CD4-positive, alpha-beta memory T cell (primary cell): ENCODE measurements at regions of chr1 and their contacts with region 1.

Region 1: GRCh38 chr1:160795951-160796383 is at the start of gene LY9:
- DNase-seq: peak; percentile 90 to 96 (median 95)
- H3K4me3 ChIP-seq: peak within 1 kb of the TSS; percentile 49 to 78
- H3K4me3 Mint-ChIP-seq: peak within 1 kb of the TSS; percentile 97 to 99 (median 98)
- H3K27ac ChIP-seq: peak within 1 kb of the TSS; percentile 82
- H3K27ac Mint-ChIP-seq: peak within 1 kb of the TSS; percentile 90 to 98 (median 97)
- H3K4me1 ChIP-seq: peaks cover 45% of the 10 kb centered on the region
- H3K4me1 Mint-ChIP-seq: peaks cover 37 to 69% (median 48%) of the 10 kb centered on the region in 4 donors
- H3K27me3 ChIP-seq: no peaks in the 10 kb centered on the region
- H3K27me3 Mint-ChIP-seq: no peaks in the 10 kb centered on the region
- total RNA-seq, gene LY9: 131 to 136 TPM

Region 2: GRCh38 chr1:160806109-160806665 is 10.2 kb after region 1 on chr1:
- CTCF ChIA-PET with region 1: interaction called, 19 read pairs
- POLR2A ChIA-PET with region 1: interaction called, 52 read pairs
- intact Hi-C with region 1: no loop called
- DNase-seq: peak in 1 of 5 donors; percentile 27
- H3K4me3 ChIP-seq: no peak overlapping the region
- H3K4me3 Mint-ChIP-seq: peak overlapping the region in 7 of 8 donors; percentile 14 to 71 (median 55)
- H3K27ac ChIP-seq: no peak overlapping the region
- H3K27ac Mint-ChIP-seq: peak overlapping the region; percentile 18 to 81 (median 65)
- H3K4me1 ChIP-seq: peaks cover 86% of the 10 kb centered on the region
- H3K4me1 Mint-ChIP-seq: peaks cover 56 to 90% (median 73%) of the 10 kb centered on the region in 4 donors
- H3K27me3 ChIP-seq: no peaks in the 10 kb centered on the region
- H3K27me3 Mint-ChIP-seq: no peaks in the 10 kb centered on the region

Region 3: GRCh38 chr1:160813215-160813614 is 17.2 kb after region 1 on chr1:
- CTCF ChIA-PET with region 1: interaction called, 19 read pairs
- POLR2A ChIA-PET with region 1: interaction called, 52 read pairs
- intact Hi-C with region 1: loop called (anchors 2 kb)
- DNase-seq: peak in 1 of 5 donors; percentile 8
- H3K4me3 ChIP-seq: no peak overlapping the region
- H3K4me3 Mint-ChIP-seq: no peak overlapping the region
- H3K27ac ChIP-seq: peak overlapping the region; percentile 6
- H3K27ac Mint-ChIP-seq: peak overlapping the region in 6 of 7 donors; percentile 14 to 81 (median 52)
- H3K4me1 ChIP-seq: peaks cover 47% of the 10 kb centered on the region
- H3K4me1 Mint-ChIP-seq: peaks cover 32 to 56% (median 44%) of the 10 kb centered on the region in 4 donors
- H3K27me3 ChIP-seq: no peaks in the 10 kb centered on the region
- H3K27me3 Mint-ChIP-seq: no peaks in the 10 kb centered on the region

Region 4: GRCh38 chr1:160821628-160822027 is 25.7 kb after region 1 on chr1:
- CTCF ChIA-PET with region 1: interaction called, 5 read pairs
- POLR2A ChIA-PET with region 1: interaction called, 33 read pairs
- intact Hi-C with region 1: no loop called
- DNase-seq: no peak
- H3K4me3 ChIP-seq: no peak overlapping the region
- H3K4me3 Mint-ChIP-seq: no peak overlapping the region
- H3K27ac ChIP-seq: no peak overlapping the region
- H3K27ac Mint-ChIP-seq: peak overlapping the region in 5 of 7 donors; percentile 10 to 71 (median 47)
- H3K4me1 ChIP-seq: no peaks in the 10 kb centered on the region
- H3K4me1 Mint-ChIP-seq: peaks cover 0 to 6% (median 3%) of the 10 kb centered on the region in 4 donors
- H3K27me3 ChIP-seq: no peaks in the 10 kb centered on the region
- H3K27me3 Mint-ChIP-seq: no peaks in the 10 kb centered on the region

Region 5: DNA sequence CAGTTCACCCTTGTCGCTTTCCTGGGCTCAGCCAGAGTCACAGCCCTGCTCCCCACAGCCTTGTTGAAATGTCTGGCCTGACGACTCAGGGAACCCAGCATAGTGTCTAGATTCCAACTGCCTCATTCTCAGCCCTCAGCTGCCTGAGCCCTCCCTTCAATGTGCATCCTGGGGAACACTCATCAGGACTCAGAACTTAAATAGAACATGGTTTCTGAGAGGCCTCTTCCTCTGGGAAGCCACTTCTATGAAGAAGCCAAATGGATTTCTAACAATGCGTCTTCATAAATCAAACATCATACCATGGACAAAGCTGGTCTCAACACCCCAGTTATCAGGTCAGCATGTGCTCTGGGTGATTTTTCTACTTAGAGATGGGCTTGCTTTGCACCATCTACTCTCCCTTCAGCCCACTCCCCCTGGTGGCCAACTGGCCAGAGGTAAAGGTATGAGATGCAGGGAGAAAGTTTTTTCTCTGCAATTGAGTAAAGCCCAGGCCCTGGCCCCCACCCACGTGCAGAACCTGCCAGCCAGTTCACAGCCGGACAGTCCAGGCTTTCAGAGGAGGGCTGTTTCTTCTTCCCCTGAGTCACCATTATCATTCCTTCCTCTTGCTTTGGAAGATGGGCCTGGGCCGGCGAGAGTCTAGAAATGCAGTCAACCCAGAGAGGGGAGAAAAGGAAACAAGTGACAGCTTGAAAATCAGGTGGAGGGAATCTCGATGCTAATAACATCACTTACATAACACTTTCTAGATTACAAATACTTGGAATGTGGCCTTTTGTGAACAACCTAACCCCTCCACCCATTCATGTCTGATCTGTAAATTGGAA is 34.6 kb after region 1 on chr1:
- CTCF ChIA-PET with region 1: interaction called, 67 read pairs
- POLR2A ChIA-PET with region 1: interaction called, 85 read pairs
- intact Hi-C with region 1: loop called (anchors 2 kb)
- DNase-seq: peak; percentile 62 to 75 (median 70)
- H3K4me3 ChIP-seq: no peak overlapping the region
- H3K4me3 Mint-ChIP-seq: no peak overlapping the region
- H3K27ac ChIP-seq: no peak overlapping the region
- H3K27ac Mint-ChIP-seq: peak overlapping the region in 6 of 7 donors; percentile 74 to 86 (median 82)
- H3K4me1 ChIP-seq: peaks cover 6% of the 10 kb centered on the region
- H3K4me1 Mint-ChIP-seq: peaks cover 13 to 35% (median 24%) of the 10 kb centered on the region in 4 donors
- H3K27me3 ChIP-seq: no peaks in the 10 kb centered on the region
- H3K27me3 Mint-ChIP-seq: no peaks in the 10 kb centered on the region

Region 6: GRCh38 chr1:160925652-160926241 is 129.8 kb after region 1 on chr1:
- CTCF ChIA-PET with region 1: no interaction called
- POLR2A ChIA-PET with region 1: no interaction called
- intact Hi-C with region 1: no loop called
- DNase-seq: no peak
- H3K4me3 ChIP-seq: no peak overlapping the region
- H3K4me3 Mint-ChIP-seq: no peak overlapping the region
- H3K27ac ChIP-seq: no peak overlapping the region
- H3K27ac Mint-ChIP-seq: no peak overlapping the region
- H3K4me1 ChIP-seq: no peaks in the 10 kb centered on the region
- H3K4me1 Mint-ChIP-seq: peaks cover 0 to 4% (median 0%) of the 10 kb centered on the region in 4 donors
- H3K27me3 ChIP-seq: no peaks in the 10 kb centered on the region
- H3K27me3 Mint-ChIP-seq: peaks cover 0 to 7% of the 10 kb centered on the region in 2 donors

Region 7: GRCh38 chr1:161076410-161076809 is 280.4 kb after region 1 on chr1:
- CTCF ChIA-PET with region 1: no interaction called
- POLR2A ChIA-PET with region 1: no interaction called
- intact Hi-C with region 1: no loop called
- DNase-seq: no peak
- H3K4me3 ChIP-seq: no peak overlapping the region
- H3K4me3 Mint-ChIP-seq: no peak overlapping the region
- H3K27ac ChIP-seq: no peak overlapping the region
- H3K27ac Mint-ChIP-seq: no peak overlapping the region
- H3K4me1 ChIP-seq: peaks cover 1% of the 10 kb centered on the region
- H3K4me1 Mint-ChIP-seq: peaks cover 4 to 13% (median 7%) of the 10 kb centered on the region in 4 donors
- H3K27me3 ChIP-seq: no peaks in the 10 kb centered on the region
- H3K27me3 Mint-ChIP-seq: no peaks in the 10 kb centered on the region